HEK293 (cell line): ENCODE measurements at regions of chrX and their contacts with region 1.

Region 1: GRCh38 chrX:119482481-119483480 is 14.5 kb downstream of the SLC25A5 start:
- H3K4me3 ChIP-seq: no peak overlapping the region; the same call in 1 of the 2 replicates
- H3K27ac ChIP-seq: no peak overlapping the region
- H3K4me1 ChIP-seq: no peaks in the 10 kb centered on the region
- CTCF ChIP-seq: peak; percentile 98

Region 2: GRCh38 chrX:119393144-119393543 is 89.6 kb before region 1 on chrX:
- CTCF ChIA-PET with region 1: no interaction called
- POLR2A ChIA-PET with region 1: no interaction called
- H3K4me3 ChIP-seq: no peak overlapping the region
- H3K27ac ChIP-seq: no peak overlapping the region
- H3K4me1 ChIP-seq: no peaks in the 10 kb centered on the region
- CTCF ChIP-seq: no peak

Region 3: GRCh38 chrX:119468930-119469635 is 13.7 kb before region 1 on chrX:
- CTCF ChIA-PET with region 1: interaction called, 14 read pairs
- POLR2A ChIA-PET with region 1: interaction called, 17 read pairs
- H3K4me3 ChIP-seq: peak overlapping the region; percentile 61
- H3K27ac ChIP-seq: peak overlapping the region; percentile 78; the same call in 1 of the 2 replicates
- H3K4me1 ChIP-seq: peaks cover 5% of the 10 kb centered on the region
- CTCF ChIP-seq: peak; percentile 79

Region 4: GRCh38 chrX:119495734-119496726 is 13.2 kb after region 1 on chrX:
- CTCF ChIA-PET with region 1: interaction called, 16 read pairs
- POLR2A ChIA-PET with region 1: no interaction called
- H3K4me3 ChIP-seq: no peak overlapping the region
- H3K27ac ChIP-seq: no peak overlapping the region
- H3K4me1 ChIP-seq: no peaks in the 10 kb centered on the region
- CTCF ChIP-seq: no peak